ENCODE measurements at regions of chr6 and their contacts with region 1.

Region 1: DNA sequence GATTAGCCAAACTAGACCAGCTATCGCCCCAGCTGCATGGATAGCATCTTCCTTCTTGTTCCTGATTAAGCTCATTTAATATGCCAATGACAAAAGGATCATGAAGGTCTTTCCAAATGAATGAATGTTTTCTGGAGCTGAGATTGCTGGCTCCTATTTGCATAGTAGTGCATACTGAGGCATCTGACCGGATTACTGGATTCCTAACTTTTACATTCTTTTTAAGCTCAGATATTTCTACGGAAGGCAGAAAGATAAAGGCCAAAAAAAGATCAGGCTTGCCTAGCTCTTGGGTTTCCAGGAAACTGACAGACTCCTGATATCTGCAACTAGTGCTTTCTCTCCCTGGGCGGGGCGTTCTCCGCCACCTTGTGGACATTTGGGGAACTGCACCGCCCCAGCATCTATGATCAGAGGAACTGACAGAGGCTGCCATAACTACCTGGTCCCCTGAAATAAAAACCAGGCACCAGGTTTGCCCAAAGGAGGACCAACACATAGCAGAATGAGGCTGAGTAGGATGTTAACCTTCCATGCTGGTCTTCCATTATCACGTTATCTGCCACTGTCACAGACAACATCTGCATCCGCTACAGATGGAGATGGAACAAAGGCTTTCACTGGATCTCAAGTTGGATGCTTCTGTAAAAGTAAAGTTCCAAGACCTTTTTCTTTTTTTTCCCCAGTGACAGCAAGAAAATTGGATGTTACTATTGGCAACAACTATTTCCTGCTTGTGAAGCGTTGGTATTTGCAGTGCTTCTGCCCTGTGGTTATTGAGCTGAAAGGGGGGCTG is 33.2 kb downstream of the NT5E start:
- DNase-seq: peak; percentile 83
- H3K4me3 Mint-ChIP-seq: no peak overlapping the region
- H3K27ac Mint-ChIP-seq: peak overlapping the region; percentile 26
- H3K4me1 Mint-ChIP-seq: peaks cover 10% of the 10 kb centered on the region
- H3K27me3 Mint-ChIP-seq: no peaks in the 10 kb centered on the region

Region 2: GRCh38 chr6:85360794-85361642 is 122.1 kb before region 1 on chr6:
- CTCF ChIA-PET with region 1: interaction called, 12 read pairs
- POLR2A ChIA-PET with region 1: no interaction called
- DNase-seq: no peak
- H3K4me3 Mint-ChIP-seq: no peak overlapping the region
- H3K27ac Mint-ChIP-seq: no peak overlapping the region
- H3K4me1 Mint-ChIP-seq: no peaks in the 10 kb centered on the region
- H3K27me3 Mint-ChIP-seq: peaks cover 2% of the 10 kb centered on the region

Region 3: GRCh38 chr6:85403331-85404015 is 79.6 kb before region 1 on chr6:
- CTCF ChIA-PET with region 1: interaction called, 10 read pairs
- POLR2A ChIA-PET with region 1: no interaction called
- DNase-seq: no peak
- H3K4me3 Mint-ChIP-seq: no peak overlapping the region
- H3K27ac Mint-ChIP-seq: peak overlapping the region; percentile 10
- H3K4me1 Mint-ChIP-seq: peaks cover 52% of the 10 kb centered on the region
- H3K27me3 Mint-ChIP-seq: peaks cover 5% of the 10 kb centered on the region

Region 4: DNA sequence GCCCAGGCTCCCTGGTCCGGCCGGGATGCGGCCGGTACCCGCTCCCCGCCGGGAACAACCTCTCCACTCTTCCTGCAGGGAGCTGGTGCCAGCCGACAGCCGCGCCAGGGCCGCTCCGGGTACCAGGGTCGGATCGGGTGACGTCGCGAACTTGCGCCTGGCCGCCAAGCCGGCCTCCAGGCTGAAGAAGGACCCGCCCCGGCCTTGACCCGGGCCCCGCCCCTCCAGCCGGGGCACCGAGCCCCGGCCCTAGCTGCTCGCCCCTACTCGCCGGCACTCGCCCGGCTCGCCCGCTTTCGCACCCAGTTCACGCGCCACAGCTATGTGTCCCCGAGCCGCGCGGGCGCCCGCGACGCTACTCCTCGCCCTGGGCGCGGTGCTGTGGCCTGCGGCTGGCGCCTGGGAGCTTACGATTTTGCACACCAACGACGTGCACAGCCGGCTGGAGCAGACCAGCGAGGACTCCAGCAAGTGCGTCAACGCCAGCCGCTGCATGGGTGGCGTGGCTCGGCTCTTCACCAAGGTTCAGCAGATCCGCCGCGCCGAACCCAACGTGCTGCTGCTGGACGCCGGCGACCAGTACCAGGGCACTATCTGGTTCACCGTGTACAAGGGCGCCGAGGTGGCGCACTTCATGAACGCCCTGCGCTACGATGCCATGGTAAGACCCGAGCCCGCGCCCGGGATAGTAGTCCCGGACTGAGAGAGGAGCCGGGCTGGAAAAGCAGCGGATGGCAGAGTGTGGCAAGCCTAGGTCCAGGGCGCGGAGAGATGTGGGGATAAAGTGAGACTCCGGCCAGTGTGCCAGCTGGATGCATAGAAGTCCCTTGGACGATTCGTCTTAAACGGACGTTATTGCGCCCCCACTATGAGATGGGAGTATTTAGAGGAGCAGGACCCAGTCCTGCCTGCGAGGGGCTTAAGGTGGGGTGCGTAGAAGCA is 33.0 kb before region 1 on chr6 and contains the start of gene NT5E:
- CTCF ChIA-PET with region 1: interaction called, 12 read pairs
- POLR2A ChIA-PET with region 1: interaction called, 3 read pairs
- DNase-seq: peak; percentile 51
- H3K4me3 Mint-ChIP-seq: peak within 1 kb of the TSS; percentile 81
- H3K27ac Mint-ChIP-seq: peak within 1 kb of the TSS; percentile 84
- H3K4me1 Mint-ChIP-seq: peaks cover 58% of the 10 kb centered on the region
- H3K27me3 Mint-ChIP-seq: peaks cover 61% of the 10 kb centered on the region
- total RNA-seq, gene NT5E: 6.1 to 7.2 TPM

Region 5: GRCh38 chr6:85460921-85461797 is 21.9 kb before region 1 on chr6:
- CTCF ChIA-PET with region 1: interaction called, 16 read pairs
- POLR2A ChIA-PET with region 1: no interaction called
- DNase-seq: peak; percentile 77
- H3K4me3 Mint-ChIP-seq: peak overlapping the region; percentile 12
- H3K27ac Mint-ChIP-seq: peak overlapping the region; percentile 93
- H3K4me1 Mint-ChIP-seq: peaks cover 85% of the 10 kb centered on the region
- H3K27me3 Mint-ChIP-seq: peaks cover 6% of the 10 kb centered on the region

Region 6: DNA sequence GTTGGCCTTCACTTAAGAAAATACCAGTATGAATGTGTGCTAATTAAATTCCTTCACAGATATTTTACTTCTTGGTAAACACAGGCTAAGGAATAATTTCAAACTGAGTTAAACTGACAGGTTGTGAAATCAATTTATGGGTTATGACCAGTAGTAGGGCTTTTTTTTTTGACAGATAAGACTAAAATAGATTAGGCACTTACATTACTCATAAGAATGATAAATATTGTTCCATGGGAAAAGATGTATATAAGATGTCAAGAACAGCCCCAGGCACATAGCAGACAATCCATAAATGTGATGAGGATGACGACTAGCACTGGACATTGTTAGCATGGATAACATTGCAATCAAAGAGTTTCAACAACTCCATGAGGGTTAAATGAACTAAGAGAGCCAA is 10.4 kb before region 1 on chr6:
- CTCF ChIA-PET with region 1: interaction called, 16 read pairs
- POLR2A ChIA-PET with region 1: no interaction called
- DNase-seq: no peak
- H3K4me3 Mint-ChIP-seq: no peak overlapping the region
- H3K27ac Mint-ChIP-seq: no peak overlapping the region
- H3K4me1 Mint-ChIP-seq: peaks cover 10% of the 10 kb centered on the region
- H3K27me3 Mint-ChIP-seq: peaks cover 6% of the 10 kb centered on the region

Region 7: GRCh38 chr6:85494554-85495536 is 11.7 kb after region 1 on chr6:
- CTCF ChIA-PET with region 1: interaction called, 26 read pairs
- POLR2A ChIA-PET with region 1: no interaction called
- DNase-seq: no peak
- H3K4me3 Mint-ChIP-seq: no peak overlapping the region
- H3K27ac Mint-ChIP-seq: no peak overlapping the region
- H3K4me1 Mint-ChIP-seq: peaks cover 5% of the 10 kb centered on the region
- H3K27me3 Mint-ChIP-seq: no peaks in the 10 kb centered on the region

Measured in activated CD4-positive, alpha-beta T cell treated with anti-CD3 and anti-CD28 coated beads, Interleukin-2, amount 10 ng/mL, durations not matched to agents 7 days and 5 days (primary cell).